Activated CD4-positive, alpha-beta memory T cell treated with anti-CD3 and anti-CD28 coated beads for 36 hours (primary cell): ENCODE measurements at regions of chr3 and their contacts with region 1.

Region 1: DNA sequence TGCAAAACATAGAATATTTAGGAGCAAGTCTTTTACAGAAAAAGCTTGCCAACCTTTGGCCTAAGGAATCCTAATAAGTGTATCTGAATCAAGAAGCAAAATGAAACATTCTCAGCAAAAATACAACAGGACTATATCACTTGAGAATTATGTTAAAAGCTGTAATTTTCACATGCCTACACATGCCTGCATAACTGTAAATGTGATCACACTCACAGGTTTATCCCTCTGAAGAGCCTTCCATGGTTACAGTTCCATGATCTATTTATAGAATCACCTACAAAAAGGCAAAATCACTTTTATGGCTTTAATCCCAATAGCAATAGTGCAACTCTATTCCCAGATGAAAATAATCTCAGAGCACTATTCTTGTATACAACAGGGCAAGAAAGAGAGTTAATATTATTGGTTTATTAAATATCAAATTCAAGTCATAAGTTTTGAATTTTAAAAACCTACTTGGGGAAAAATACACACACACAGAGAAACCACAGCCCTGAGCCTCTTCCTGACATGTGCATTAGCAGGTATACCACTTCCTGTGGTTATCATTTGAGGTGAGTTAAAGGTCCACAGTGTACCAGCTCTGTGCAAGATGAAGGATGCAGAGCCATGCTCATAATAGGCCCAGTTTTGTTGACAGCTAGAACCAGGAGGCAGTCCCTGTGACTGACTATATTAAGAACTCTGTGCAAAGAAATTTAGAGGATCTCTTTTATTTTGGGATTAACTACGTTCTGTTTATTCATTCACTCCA is 252.5 kb upstream of the TGFBR2 start:
- DNase-seq: peak; percentile 64
- H3K4me3 Mint-ChIP-seq: peak overlapping the region; percentile 17
- H3K27ac Mint-ChIP-seq: no peak overlapping the region
- H3K4me1 Mint-ChIP-seq: peaks cover 56% of the 10 kb centered on the region
- H3K27me3 Mint-ChIP-seq: peaks cover 20% of the 10 kb centered on the region

Region 2: GRCh38 chr3:29245441-29245840 is 1108.4 kb before region 1 on chr3:
- CTCF ChIA-PET with region 1: no interaction called
- POLR2A ChIA-PET with region 1: no interaction called
- intact Hi-C with region 1: no loop called
- DNase-seq: no peak
- H3K4me3 Mint-ChIP-seq: no peak overlapping the region
- H3K27ac Mint-ChIP-seq: no peak overlapping the region
- H3K4me1 Mint-ChIP-seq: no peaks in the 10 kb centered on the region
- H3K27me3 Mint-ChIP-seq: no peaks in the 10 kb centered on the region

Region 3: DNA sequence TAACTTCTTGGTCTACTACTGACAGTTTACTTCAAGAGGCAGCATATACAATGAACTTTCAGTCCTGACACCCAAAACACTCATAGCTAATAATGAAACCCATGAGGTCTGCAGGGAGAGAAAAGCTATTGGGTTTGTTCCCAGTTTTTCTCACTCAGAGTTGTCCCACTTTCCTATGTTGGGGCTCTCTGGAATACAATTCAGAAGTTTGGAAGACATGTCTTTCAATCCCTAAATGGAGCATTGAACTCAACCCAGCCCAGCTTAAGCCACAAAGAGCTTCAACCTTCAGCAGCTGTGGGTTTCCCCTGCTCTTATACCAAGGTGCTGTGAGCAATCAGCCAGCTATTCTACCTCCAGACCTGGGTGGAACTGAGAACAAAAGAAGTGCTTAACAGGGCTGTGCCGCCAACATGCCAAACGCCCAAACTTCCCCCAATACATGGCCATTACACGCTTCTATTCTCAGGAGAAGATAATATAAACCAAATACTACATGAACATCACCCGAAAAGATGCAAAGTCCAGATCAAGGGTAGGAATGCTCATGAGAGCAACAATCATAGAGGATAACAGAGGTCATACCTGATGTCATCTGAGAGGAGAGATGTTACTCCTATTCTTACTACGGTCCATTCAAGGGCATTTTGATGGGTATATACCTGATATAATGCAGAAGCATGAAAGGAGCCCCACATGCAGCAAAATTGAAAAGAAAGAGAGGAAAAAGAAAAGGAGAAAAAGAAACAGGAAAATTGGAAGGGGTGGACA is 121.3 kb after region 1 on chr3:
- CTCF ChIA-PET with region 1: no interaction called
- POLR2A ChIA-PET with region 1: no interaction called
- intact Hi-C with region 1: loop called (anchors 5 kb)
- DNase-seq: peak; percentile 14
- H3K4me3 Mint-ChIP-seq: no peak overlapping the region
- H3K27ac Mint-ChIP-seq: no peak overlapping the region
- H3K4me1 Mint-ChIP-seq: peaks cover 29% of the 10 kb centered on the region
- H3K27me3 Mint-ChIP-seq: no peaks in the 10 kb centered on the region